Heart left ventricle (tissue), 16 donors: ENCODE measurements at regions of chr5 and their contacts with region 1.

Region 1: DNA sequence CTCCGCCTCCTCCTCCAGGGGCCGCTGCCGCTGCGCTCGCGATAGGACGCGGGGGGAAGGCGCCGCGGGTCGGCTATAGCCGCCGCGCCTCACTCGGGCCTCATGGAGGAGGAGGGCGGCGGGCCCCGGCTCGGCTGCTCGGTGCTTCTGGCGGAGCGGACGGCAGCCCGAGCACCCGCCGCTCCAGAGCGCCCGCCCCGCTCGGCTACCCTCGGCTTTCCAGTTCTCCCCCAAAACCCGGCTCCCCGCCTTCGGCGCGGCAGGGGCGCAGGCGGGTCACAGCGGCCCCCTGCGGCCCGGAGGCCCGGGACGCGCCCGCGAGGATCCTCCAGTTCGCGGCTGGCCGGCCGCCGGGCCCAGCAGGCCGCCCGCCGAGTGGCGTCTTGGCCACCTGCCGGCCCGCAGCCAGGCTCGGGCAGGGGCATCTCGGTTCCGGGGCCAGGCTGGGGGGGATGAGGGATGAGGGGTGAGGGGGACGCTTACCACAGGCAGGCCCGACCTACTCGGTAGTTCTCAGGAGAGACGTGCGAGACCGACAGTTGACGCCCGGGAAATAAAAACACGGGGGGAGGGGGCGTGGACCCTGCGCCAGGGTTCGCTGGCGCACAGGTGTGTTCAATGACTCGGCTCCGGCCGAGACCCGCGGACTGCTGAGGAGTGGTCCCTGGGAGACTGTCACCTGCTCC is at the start of gene PAIP1:
- DNase-seq: peak; percentile 76 to 92 (median 84)
- ATAC-seq: peak; percentile 8 to 93 (median 86)
- H3K4me3 ChIP-seq: peak within 1 kb of the TSS; percentile 66 to 95 (median 85)
- H3K27ac ChIP-seq: peak within 1 kb of the TSS; percentile 89 to 99 (median 98)
- H3K4me1 ChIP-seq: peaks cover 3 to 47% (median 33%) of the 10 kb centered on the region in 12 donors
- H3K27me3 ChIP-seq: peaks cover 0 to 4% (median 0%) of the 10 kb centered on the region in 9 donors
- CTCF ChIP-seq: peak; percentile 50 to 92 (median 76)
- POLR2A ChIP-seq: peak in 1 of 2 donors; percentile 44
- total RNA-seq, gene PAIP1: 99.8 to 173 (median 140) TPM

Region 2: GRCh38 chr5:43514816-43515677 is 42.0 kb before region 1 on chr5 and contains the start of gene C5orf34:
- intact Hi-C with region 1: loop called in 2 of 10 experiments (anchors 2 to 5 kb)
- DNase-seq: peak; percentile 96 to 98 (median 97)
- ATAC-seq: peak; percentile 100
- H3K4me3 ChIP-seq: peak within 1 kb of the TSS; percentile 44 to 83 (median 64)
- H3K27ac ChIP-seq: peak within 1 kb of the TSS; percentile 18 to 97 (median 87)
- H3K4me1 ChIP-seq: peaks cover 0 to 21% (median 9%) of the 10 kb centered on the region in 12 donors
- H3K27me3 ChIP-seq: no peaks in the 10 kb centered on the region
- CTCF ChIP-seq: peak in 4 of 12 donors; percentile 3 to 19 (median 12)
- POLR2A ChIP-seq: peak in 1 of 2 donors; percentile 59
- total RNA-seq, gene C5orf34: 0.19 to 1.6 (median 0.60) TPM

Region 3: DNA sequence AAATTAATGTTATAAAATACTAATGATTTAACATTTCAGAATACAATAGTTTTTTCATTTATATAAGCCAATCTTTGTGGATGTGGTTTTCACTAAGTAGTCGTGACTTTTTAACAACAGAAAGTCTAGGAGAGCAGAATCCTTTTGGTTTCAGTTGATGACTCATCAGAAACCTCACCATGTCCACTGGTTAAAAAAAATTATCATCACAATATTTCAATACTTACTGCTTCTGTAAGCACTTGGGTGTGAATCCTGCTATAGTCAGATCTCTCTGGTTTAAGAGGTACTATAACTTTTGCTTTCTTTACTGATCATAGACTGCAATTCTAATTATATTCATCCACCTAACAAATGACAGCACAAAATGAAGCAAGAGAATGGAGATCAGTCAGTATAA is 1328.9 kb after region 1 on chr5:
- intact Hi-C with region 1: no loop called
- DNase-seq: no peak
- ATAC-seq: no peak
- H3K4me3 ChIP-seq: no peak overlapping the region
- H3K27ac ChIP-seq: no peak overlapping the region
- H3K4me1 ChIP-seq: no peaks in the 10 kb centered on the region
- H3K27me3 ChIP-seq: no peaks in the 10 kb centered on the region
- CTCF ChIP-seq: no peak
- POLR2A ChIP-seq: no peak